Activated CD4-positive, alpha-beta memory T cell treated with anti-CD3 and anti-CD28 coated beads, Interleukin-2, amount 10 ng/mL, durations not matched to agents 7 days and 5 days (primary cell): ENCODE measurements at regions of chr17 and their contacts with region 1.

Region 1: GRCh38 chr17:80892019-80892855 is 99.4 kb upstream of the CHMP6 start:
- DNase-seq: peak; percentile 95
- H3K4me3 Mint-ChIP-seq: peak overlapping the region; percentile 94
- H3K27ac Mint-ChIP-seq: peak overlapping the region; percentile 100
- H3K4me1 Mint-ChIP-seq: peaks cover 85% of the 10 kb centered on the region
- H3K27me3 Mint-ChIP-seq: no peaks in the 10 kb centered on the region

Region 2: DNA sequence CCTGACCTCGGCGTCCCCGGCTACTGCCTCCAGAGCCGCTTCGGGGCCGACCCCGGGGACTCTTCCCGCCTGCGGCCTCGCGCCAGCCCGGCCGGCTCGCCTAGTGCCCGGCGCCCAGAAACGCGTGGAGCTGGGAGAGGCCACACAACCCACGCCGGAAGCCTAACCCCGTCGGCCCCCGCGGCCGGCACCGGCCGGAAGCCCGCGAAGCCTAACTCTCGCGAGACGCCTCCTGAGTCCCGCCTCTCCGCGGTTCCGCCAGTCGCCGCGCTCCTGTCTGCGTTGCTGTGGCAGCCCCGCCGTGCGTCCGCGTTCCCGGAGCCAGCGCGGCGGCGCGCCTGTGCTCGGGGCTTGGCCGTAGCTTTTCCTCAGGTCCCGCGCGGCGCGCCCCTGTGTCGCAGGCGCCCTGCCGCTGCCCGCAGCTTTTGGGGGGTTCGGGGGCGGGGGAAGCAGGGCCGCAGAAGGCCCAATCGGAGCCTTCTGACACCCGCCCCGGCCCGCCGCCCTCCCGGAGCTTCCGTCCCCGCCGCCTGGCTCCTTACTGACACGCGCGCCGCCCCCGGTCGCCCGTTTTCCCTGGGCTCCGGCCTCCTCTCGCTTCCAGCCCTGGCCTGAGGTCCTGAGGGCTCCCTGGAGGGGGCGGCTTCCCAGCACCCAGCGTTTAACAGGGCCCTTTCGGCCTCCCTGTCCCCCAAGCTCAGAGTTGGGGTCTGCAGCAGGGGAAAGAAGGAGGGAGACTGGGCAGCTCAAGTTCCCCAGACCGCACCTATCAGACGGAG is 437.5 kb before region 1 on chr17:
- CTCF ChIA-PET with region 1: interaction called, 3 read pairs
- POLR2A ChIA-PET with region 1: interaction called, 17 read pairs
- DNase-seq: peak; percentile 96
- H3K4me3 Mint-ChIP-seq: peak overlapping the region; percentile 85
- H3K27ac Mint-ChIP-seq: peak overlapping the region; percentile 89
- H3K4me1 Mint-ChIP-seq: peaks cover 48% of the 10 kb centered on the region
- H3K27me3 Mint-ChIP-seq: peaks cover 18% of the 10 kb centered on the region

Region 3: GRCh38 chr17:80761110-80761871 is 130.9 kb before region 1 on chr17:
- CTCF ChIA-PET with region 1: interaction called, 3 read pairs
- POLR2A ChIA-PET with region 1: interaction called, 14 read pairs
- DNase-seq: peak; percentile 81
- H3K4me3 Mint-ChIP-seq: peak overlapping the region; percentile 63
- H3K27ac Mint-ChIP-seq: peak overlapping the region; percentile 98
- H3K4me1 Mint-ChIP-seq: peaks cover 79% of the 10 kb centered on the region
- H3K27me3 Mint-ChIP-seq: no peaks in the 10 kb centered on the region

Region 4: DNA sequence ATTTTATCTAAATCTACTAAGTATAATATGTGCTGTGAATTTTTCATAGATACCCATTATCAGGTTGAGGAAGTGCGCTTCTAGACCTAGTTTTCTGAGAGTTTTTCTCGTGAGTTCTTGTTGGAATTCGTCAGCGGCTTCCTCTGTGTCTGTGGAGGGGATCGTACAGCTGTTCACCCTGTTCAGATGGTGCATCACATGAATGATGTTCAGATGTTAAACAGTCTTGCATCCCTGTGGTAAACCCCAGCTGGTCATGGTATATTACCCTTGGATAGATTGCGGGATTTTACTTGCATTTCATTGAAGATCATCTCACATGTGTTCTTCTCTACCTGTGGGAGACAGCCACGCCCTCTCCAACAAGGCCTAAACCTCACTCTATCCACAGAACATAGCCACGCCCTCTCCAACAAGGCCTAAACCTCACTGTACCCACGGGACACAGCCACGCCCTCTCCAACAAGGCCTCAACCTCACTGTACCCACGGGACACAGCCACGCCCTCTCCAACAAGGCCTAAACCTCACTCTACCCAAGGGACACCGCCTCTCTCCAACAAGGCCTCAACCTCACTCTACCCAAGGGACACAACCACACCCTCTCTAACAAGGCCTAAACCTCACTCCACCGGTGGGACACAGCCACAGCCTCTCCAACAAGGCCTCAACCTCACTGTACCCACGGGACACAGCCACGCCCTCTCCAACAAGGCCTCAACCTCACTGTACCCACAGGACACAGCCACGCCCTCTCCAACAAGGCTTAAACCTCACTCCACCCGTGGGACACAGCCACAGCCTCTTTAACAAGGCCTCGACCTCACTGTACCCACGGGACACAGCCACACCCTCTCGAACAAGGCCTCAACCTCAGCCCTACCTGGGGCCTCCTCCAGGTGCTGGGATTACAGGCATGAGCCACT is 80.8 kb before region 1 on chr17:
- CTCF ChIA-PET with region 1: interaction called, 11 read pairs
- POLR2A ChIA-PET with region 1: interaction called, 11 read pairs
- DNase-seq: peak; percentile 64
- H3K4me3 Mint-ChIP-seq: peak overlapping the region; percentile 24
- H3K27ac Mint-ChIP-seq: peak overlapping the region; percentile 99
- H3K4me1 Mint-ChIP-seq: peaks cover 60% of the 10 kb centered on the region
- H3K27me3 Mint-ChIP-seq: no peaks in the 10 kb centered on the region

Region 5: DNA sequence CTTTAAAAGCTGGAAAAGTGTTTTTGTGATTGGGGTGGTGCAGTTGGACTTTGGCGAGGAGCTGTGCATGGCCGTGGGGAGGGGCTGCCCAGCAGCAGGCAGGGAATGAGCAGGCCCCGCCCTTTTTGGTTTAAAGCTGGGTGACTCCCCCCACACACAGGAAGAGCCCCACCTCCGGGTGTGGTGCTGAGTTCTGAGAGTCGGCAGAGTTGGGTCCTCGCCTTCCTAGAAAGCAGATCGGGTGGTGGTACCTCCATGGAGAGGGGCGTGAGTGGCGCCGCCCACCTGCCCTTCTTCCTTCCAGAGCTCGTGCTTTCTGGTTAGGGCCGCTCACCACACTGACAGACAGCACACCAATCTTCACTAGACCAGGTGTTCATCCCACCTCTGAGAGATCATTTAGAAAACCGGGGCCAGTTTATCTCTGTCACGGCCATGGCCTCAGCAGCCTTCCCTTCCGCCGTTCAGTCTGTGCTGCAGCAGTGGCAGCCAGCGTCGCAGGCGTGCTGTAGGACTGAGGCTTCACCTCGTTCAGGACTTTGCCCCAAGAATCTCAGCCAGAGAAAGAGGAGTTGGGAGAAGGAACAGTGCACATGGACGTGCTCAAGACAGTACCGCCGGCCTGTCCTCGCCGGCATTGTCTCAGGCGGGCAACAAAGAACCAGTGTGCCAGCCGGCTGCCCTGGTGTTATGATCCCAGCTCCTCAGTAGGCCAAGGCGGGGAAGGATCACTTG is 44.6 kb before region 1 on chr17:
- CTCF ChIA-PET with region 1: interaction called, 5 read pairs
- POLR2A ChIA-PET with region 1: interaction called, 49 read pairs
- DNase-seq: peak; percentile 88
- H3K4me3 Mint-ChIP-seq: peak overlapping the region; percentile 6
- H3K27ac Mint-ChIP-seq: peak overlapping the region; percentile 96
- H3K4me1 Mint-ChIP-seq: peaks cover 77% of the 10 kb centered on the region
- H3K27me3 Mint-ChIP-seq: no peaks in the 10 kb centered on the region

Region 6: DNA sequence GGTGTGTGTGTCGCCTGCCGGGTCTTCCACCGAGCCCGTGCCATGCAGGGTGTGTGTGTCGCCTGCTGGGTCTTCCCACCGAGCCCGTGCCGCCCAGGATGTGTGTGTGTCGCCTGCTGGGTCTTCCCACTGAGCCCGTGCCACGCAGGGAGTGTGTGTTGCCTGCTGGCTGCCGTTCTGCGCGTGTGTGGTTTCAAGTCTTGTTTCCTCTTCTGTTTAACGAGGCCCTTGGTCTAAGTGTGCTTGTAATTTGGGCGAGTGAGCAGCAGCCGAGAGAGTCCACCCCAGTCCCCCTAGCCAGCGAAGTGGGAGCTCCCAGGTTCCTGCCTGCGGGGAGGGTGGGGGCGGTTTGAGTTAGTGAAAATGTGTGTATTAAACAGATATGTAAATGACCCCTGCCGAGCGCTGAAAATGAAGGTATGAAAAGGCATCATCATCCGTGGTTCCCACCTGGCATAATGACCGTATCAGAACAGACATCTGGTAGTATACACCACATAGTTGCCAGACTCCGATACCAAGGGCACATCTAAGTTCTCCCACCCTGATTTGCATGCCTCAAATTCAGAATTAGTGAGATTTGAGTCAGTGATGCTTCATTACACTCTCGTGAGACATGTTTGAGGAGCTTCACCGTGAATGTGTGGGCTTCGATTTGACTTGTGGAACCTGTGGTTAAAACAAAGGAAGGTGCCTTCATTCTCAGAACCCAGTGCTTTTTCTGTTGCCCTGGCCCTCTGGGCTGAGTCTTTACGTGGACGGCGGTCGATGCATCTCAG is 15.1 kb before region 1 on chr17:
- CTCF ChIA-PET with region 1: interaction called, 7 read pairs
- POLR2A ChIA-PET with region 1: interaction called, 120 read pairs
- DNase-seq: peak; percentile 77
- H3K4me3 Mint-ChIP-seq: peak overlapping the region; percentile 72
- H3K27ac Mint-ChIP-seq: peak overlapping the region; percentile 100
- H3K4me1 Mint-ChIP-seq: peaks cover 68% of the 10 kb centered on the region
- H3K27me3 Mint-ChIP-seq: no peaks in the 10 kb centered on the region

Region 7: DNA sequence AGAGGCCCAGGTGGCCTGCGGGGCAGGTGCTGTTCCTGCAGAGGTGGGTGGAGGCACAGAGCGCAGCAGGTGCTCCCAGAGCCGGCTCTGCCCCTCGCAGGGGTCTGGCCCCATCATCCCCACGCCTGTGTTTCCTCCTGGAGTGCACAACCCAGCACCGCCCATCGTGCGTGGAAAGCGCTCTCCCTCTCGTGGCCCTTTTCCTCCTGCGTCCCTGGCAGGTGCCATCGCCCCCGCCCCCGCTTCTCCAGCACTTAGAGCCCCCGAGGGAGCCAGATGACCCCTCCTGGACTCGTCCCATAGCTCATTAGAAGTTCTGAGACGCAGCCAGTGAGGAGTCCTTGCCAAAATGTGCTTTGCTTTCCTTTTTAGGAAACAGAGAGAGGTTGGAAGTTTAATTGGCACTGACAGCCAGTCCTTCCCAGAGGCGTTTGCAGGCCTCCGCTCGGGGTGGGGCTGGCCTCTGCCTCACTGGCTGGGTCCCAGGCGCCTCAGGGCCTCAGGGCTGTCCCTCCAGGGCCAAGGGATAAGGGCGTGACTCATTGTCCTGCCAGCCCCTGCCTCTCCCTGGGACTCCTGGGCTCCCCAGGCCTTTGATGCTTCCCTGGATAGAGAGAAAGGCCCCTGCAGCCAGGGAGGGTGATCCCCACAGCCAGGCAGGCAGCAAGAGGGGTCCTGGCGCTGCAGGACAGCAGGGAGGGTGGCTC is 67.2 kb after region 1 on chr17:
- CTCF ChIA-PET with region 1: no interaction called
- POLR2A ChIA-PET with region 1: no interaction called
- DNase-seq: no peak
- H3K4me3 Mint-ChIP-seq: no peak overlapping the region
- H3K27ac Mint-ChIP-seq: no peak overlapping the region
- H3K4me1 Mint-ChIP-seq: no peaks in the 10 kb centered on the region
- H3K27me3 Mint-ChIP-seq: no peaks in the 10 kb centered on the region

Region 8: GRCh38 chr17:80991645-80992076 is 99.4 kb after region 1 on chr17 and contains the start of gene CHMP6:
- CTCF ChIA-PET with region 1: no interaction called
- POLR2A ChIA-PET with region 1: no interaction called
- DNase-seq: peak; percentile 73
- H3K4me3 Mint-ChIP-seq: peak within 1 kb of the TSS; percentile 74
- H3K27ac Mint-ChIP-seq: peak within 1 kb of the TSS; percentile 58
- H3K4me1 Mint-ChIP-seq: peaks cover 26% of the 10 kb centered on the region
- H3K27me3 Mint-ChIP-seq: peaks cover 2% of the 10 kb centered on the region
- total RNA-seq, gene CHMP6: 30.3 to 31.6 TPM